A673 (cell line): ENCODE measurements at regions of chr18 and their contacts with region 1.

Region 1: GRCh38 chr18:5772306-5773105 is 122.8 kb downstream of the TMEM200C start:
- DNase-seq: no peak
- H3K4me3 ChIP-seq: no peak overlapping the region
- H3K27ac ChIP-seq: no peak overlapping the region
- H3K4me1 ChIP-seq: no peaks in the 10 kb centered on the region
- H3K27me3 ChIP-seq: peaks cover 6% of the 10 kb centered on the region
- CTCF ChIP-seq: no peak

Region 2: GRCh38 chr18:5839102-5839501 is 66.6 kb after region 1 on chr18:
- CTCF ChIA-PET with region 1: no interaction called
- POLR2A ChIA-PET with region 1: no interaction called
- intact Hi-C with region 1: loop called (anchors 10 kb)
- DNase-seq: no peak
- H3K4me3 ChIP-seq: no peak overlapping the region
- H3K27ac ChIP-seq: no peak overlapping the region
- H3K4me1 ChIP-seq: no peaks in the 10 kb centered on the region
- H3K27me3 ChIP-seq: no peaks in the 10 kb centered on the region
- CTCF ChIP-seq: no peak